ENCODE measurements at regions of chr10 and their contacts with region 1.

Region 1: DNA sequence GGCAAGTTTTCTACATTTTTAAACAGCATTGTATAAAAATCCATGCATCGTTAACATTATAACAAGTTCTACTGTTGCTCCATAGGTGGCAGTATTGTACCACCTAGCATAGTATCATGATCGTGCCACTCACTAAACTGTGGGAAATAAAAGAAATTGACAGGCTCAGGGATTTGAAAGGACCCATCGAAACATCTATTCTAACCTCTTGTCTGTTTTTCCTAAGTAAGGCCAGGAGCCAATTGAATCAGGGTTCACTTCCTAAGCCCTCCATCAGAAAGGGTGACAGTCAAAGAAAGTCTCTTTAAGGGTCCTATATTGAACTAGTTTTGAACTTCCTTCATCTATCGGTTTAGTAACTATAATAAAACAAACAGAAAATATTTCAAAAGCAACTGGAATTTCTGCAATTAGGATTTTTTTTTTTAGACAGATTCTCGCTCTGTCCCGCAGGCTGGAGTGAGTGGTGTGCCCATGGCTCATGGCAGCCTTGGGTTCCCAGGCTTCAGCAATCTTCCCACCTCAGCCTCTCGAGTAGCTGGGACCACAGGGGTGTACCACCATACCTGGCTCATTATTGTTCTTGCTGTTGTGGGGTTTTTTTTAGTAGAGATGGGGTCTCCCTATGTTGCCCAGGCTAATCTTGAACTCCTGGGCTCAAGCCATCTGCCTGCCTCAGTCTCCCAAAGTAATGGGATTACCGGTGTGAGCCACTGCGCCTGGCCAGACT is 9.4 kb downstream of the HACD1 start:
- DNase-seq: no peak
- H3K4me3 ChIP-seq: no peak overlapping the region
- H3K27ac ChIP-seq: no peak overlapping the region
- H3K4me1 ChIP-seq: no peaks in the 10 kb centered on the region
- H3K27me3 ChIP-seq: no peaks in the 10 kb centered on the region
- CTCF ChIP-seq: peak; percentile 58 to 93 (median 87)
- POLR2A ChIP-seq: no peak

Region 2: DNA sequence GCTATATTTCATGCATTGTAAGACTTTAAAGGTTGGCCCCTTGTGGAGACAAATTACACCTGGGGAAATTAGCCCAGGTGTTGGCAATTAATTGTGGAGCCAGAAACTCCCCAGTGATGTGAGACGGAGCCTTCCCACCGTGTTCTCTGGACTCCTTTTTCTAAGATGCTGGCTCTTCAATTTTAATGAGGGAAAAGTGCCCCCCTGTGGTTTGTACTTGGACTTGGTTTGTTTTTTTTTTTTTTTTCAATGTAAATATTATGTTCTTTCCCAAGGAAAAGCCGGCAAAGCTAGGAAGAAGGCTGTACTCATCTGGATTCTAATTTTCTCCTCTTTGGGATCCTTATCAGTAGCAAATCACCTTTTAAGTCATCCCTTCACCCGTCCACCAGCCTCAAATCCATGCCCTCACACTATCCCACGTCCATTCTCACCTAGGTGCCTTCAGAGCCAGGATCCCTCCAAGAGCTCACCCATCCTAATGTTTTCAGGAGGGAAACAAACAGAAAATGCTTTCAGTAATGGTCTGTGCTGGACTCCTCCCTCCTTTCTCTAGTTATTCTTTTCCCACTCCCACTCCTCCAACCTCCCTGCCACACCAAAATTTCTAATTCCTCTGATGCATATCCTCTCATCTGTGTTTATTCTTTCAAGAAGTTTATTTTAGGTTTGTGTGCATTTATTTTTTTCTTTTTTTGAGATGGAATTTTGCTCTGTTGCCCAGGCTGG is 133.0 kb before region 1 on chr10:
- intact Hi-C with region 1: no loop called
- DNase-seq: no peak
- H3K4me3 ChIP-seq: no peak overlapping the region
- H3K27ac ChIP-seq: no peak overlapping the region
- H3K4me1 ChIP-seq: no peaks in the 10 kb centered on the region
- H3K27me3 ChIP-seq: no peaks in the 10 kb centered on the region
- CTCF ChIP-seq: no peak
- POLR2A ChIP-seq: no peak

Region 3: GRCh38 chr10:17742918-17743317 is 135.2 kb after region 1 on chr10:
- intact Hi-C with region 1: loop called (anchors 5 kb)
- DNase-seq: peak; percentile 42 to 68
- H3K4me3 ChIP-seq: no peak overlapping the region
- H3K27ac ChIP-seq: no peak overlapping the region
- H3K4me1 ChIP-seq: peaks cover 0 to 6% of the 10 kb centered on the region in 2 donors
- H3K27me3 ChIP-seq: no peaks in the 10 kb centered on the region
- CTCF ChIP-seq: peak; percentile 71 to 92 (median 80)
- POLR2A ChIP-seq: no peak

Region 4: GRCh38 chr10:18113881-18114280 is 506.1 kb after region 1 on chr10:
- intact Hi-C with region 1: loop called (anchors 10 kb)
- DNase-seq: no peak
- H3K4me3 ChIP-seq: no peak overlapping the region
- H3K27ac ChIP-seq: no peak overlapping the region
- H3K4me1 ChIP-seq: no peaks in the 10 kb centered on the region
- H3K27me3 ChIP-seq: no peaks in the 10 kb centered on the region
- CTCF ChIP-seq: no peak
- POLR2A ChIP-seq: no peak

Region 5: DNA sequence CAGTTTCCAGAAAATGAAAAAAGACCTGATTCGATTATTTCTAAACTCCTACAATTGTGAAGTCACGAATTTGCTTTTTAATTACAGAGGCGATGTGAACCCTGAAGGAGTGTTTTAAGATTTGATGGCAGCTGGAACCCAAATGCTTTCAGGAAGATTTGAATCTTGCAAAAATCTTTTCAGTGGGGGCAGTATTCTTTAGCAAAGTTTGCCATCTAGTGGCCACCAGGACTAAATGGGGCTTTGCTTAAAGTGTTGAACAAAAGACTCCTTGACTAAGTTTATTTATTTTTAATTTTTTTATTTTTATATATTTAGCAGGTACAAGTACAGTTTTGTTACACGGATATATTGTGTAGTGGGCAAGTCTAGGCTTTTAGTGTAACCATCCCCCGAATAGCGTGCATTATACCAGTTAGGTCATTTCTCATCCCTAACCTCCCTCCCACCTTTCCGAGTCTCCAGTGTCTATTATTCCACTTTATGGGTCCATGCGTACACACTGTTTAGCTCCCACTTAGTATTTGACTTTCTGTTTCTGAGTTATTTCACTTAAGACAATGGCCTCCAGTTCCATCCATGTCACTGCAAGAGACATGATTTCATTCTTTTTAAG is 631.2 kb after region 1 on chr10:
- intact Hi-C with region 1: loop called (anchors 10 kb)
- DNase-seq: no peak
- H3K4me3 ChIP-seq: no peak overlapping the region
- H3K27ac ChIP-seq: no peak overlapping the region
- H3K4me1 ChIP-seq: peaks cover 9 to 11% of the 10 kb centered on the region in 2 donors
- H3K27me3 ChIP-seq: no peaks in the 10 kb centered on the region
- CTCF ChIP-seq: peak in 4 of 6 experiments; percentile 34 to 67 (median 58)
- POLR2A ChIP-seq: no peak